CD4-positive, alpha-beta memory T cell (primary cell): ENCODE measurements at regions of chr4 and their contacts with region 1.

Region 1: GRCh38 chr4:139030614-139031235 is 15.1 kb downstream of the NOCT start:
- DNase-seq: peak; percentile 72 to 76 (median 74)
- H3K4me3 ChIP-seq: no peak overlapping the region
- H3K4me3 Mint-ChIP-seq: no peak overlapping the region
- H3K27ac ChIP-seq: no peak overlapping the region
- H3K27ac Mint-ChIP-seq: peak overlapping the region in 5 of 7 donors; percentile 0 to 58 (median 19)
- H3K4me1 ChIP-seq: peaks cover 3% of the 10 kb centered on the region
- H3K4me1 Mint-ChIP-seq: peaks cover 6 to 11% (median 8%) of the 10 kb centered on the region in 4 donors
- H3K27me3 ChIP-seq: no peaks in the 10 kb centered on the region
- H3K27me3 Mint-ChIP-seq: no peaks in the 10 kb centered on the region

Region 2: DNA sequence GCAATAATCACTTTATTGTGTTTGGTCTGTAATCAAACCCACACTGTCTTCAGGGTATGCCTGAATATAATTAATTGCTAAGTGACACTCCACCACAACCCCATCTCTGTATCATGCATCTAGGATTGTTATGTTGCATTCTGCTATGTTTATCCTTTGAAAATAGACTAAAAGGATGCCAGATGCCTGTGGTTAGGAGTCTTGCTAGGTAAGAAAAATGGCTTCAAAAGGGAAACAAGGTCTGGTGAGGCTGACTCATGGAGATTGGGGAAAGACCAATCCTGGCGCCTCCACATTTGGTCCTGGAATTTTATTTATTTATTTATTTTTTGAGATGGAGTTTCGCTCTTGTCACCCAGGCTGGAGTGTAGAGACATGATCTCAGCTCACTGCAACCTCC is 428.1 kb before region 1 on chr4:
- CTCF ChIA-PET with region 1: no interaction called
- POLR2A ChIA-PET with region 1: no interaction called
- intact Hi-C with region 1: no loop called
- DNase-seq: no peak
- H3K4me3 ChIP-seq: no peak overlapping the region
- H3K4me3 Mint-ChIP-seq: no peak overlapping the region
- H3K27ac ChIP-seq: no peak overlapping the region
- H3K27ac Mint-ChIP-seq: no peak overlapping the region
- H3K4me1 ChIP-seq: no peaks in the 10 kb centered on the region
- H3K4me1 Mint-ChIP-seq: no peaks in the 10 kb centered on the region
- H3K27me3 ChIP-seq: no peaks in the 10 kb centered on the region
- H3K27me3 Mint-ChIP-seq: no peaks in the 10 kb centered on the region

Region 3: GRCh38 chr4:138680989-138681604 is 349.6 kb before region 1 on chr4:
- CTCF ChIA-PET with region 1: no interaction called
- POLR2A ChIA-PET with region 1: no interaction called
- intact Hi-C with region 1: no loop called
- DNase-seq: peak in 4 of 5 donors; percentile 32 to 43 (median 42)
- H3K4me3 ChIP-seq: no peak overlapping the region
- H3K4me3 Mint-ChIP-seq: no peak overlapping the region
- H3K27ac ChIP-seq: no peak overlapping the region
- H3K27ac Mint-ChIP-seq: no peak overlapping the region
- H3K4me1 ChIP-seq: no peaks in the 10 kb centered on the region
- H3K4me1 Mint-ChIP-seq: no peaks in the 10 kb centered on the region
- H3K27me3 ChIP-seq: no peaks in the 10 kb centered on the region
- H3K27me3 Mint-ChIP-seq: peaks cover 8 to 9% of the 10 kb centered on the region in 2 donors

Region 4: GRCh38 chr4:139007640-139008039 is 23.1 kb before region 1 on chr4:
- CTCF ChIA-PET with region 1: interaction called, 11 read pairs
- POLR2A ChIA-PET with region 1: no interaction called
- intact Hi-C with region 1: no loop called
- DNase-seq: no peak
- H3K4me3 ChIP-seq: no peak overlapping the region
- H3K4me3 Mint-ChIP-seq: no peak overlapping the region
- H3K27ac ChIP-seq: no peak overlapping the region
- H3K27ac Mint-ChIP-seq: no peak overlapping the region
- H3K4me1 ChIP-seq: no peaks in the 10 kb centered on the region
- H3K4me1 Mint-ChIP-seq: no peaks in the 10 kb centered on the region
- H3K27me3 ChIP-seq: no peaks in the 10 kb centered on the region
- H3K27me3 Mint-ChIP-seq: no peaks in the 10 kb centered on the region

Region 5: GRCh38 chr4:139050446-139050845 is 19.7 kb after region 1 on chr4:
- CTCF ChIA-PET with region 1: interaction called, 14 read pairs
- POLR2A ChIA-PET with region 1: no interaction called
- intact Hi-C with region 1: no loop called
- DNase-seq: no peak
- H3K4me3 ChIP-seq: no peak overlapping the region
- H3K4me3 Mint-ChIP-seq: no peak overlapping the region
- H3K27ac ChIP-seq: no peak overlapping the region
- H3K27ac Mint-ChIP-seq: peak overlapping the region in 3 of 7 donors; percentile 21 to 42 (median 42)
- H3K4me1 ChIP-seq: peaks cover 2% of the 10 kb centered on the region
- H3K4me1 Mint-ChIP-seq: peaks cover 8 to 18% (median 13%) of the 10 kb centered on the region in 4 donors
- H3K27me3 ChIP-seq: no peaks in the 10 kb centered on the region
- H3K27me3 Mint-ChIP-seq: no peaks in the 10 kb centered on the region

Region 6: GRCh38 chr4:139177868-139178611 is 147.3 kb after region 1 on chr4:
- CTCF ChIA-PET with region 1: interaction called, 5 read pairs
- POLR2A ChIA-PET with region 1: interaction called, 4 read pairs
- intact Hi-C with region 1: loop called (anchors 5 kb)
- DNase-seq: peak; percentile 92 to 94 (median 92)
- H3K4me3 ChIP-seq: peak overlapping the region; percentile 88 to 89
- H3K4me3 Mint-ChIP-seq: peak overlapping the region; percentile 89 to 94 (median 92)
- H3K27ac ChIP-seq: peak overlapping the region; percentile 96
- H3K27ac Mint-ChIP-seq: peak overlapping the region; percentile 92 to 97 (median 96)
- H3K4me1 ChIP-seq: peaks cover 17% of the 10 kb centered on the region
- H3K4me1 Mint-ChIP-seq: peaks cover 14 to 29% (median 18%) of the 10 kb centered on the region in 4 donors
- H3K27me3 ChIP-seq: no peaks in the 10 kb centered on the region
- H3K27me3 Mint-ChIP-seq: no peaks in the 10 kb centered on the region

Region 7: DNA sequence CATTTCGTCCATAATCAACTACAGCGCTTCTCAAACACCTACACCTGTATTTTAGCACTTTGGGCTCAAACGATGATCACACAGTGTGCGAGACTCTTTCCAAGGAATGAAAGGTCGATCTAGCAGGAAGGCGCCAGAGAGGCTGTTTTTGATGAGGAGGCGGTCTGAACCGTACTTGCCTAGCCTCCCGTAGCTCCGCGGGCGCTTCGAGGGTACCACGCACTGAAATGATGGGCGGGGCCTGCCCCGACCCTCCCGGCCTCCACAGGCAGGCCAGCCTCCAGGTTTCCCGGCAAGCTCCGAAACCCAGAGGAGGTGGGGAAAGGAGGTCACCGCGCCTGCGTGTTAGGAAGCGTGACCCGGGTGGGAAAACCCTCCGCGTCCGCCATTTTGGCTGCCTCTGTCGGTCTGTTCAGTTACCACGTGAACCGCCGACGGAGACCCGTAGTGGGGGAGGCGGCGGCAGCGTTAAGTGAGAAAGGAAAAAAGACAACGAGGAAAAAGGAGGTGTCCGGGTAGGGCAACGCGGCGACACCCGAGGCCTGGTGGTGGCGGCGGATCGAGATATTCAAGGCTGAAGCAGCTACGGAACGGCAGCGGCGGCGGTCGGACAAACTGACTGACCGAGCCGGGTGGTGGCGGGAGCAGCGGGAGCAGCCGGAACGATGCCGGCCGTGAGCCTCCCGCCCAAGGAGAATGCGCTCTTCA is 270.5 kb after region 1 on chr4 and contains the start of gene NAA15:
- CTCF ChIA-PET with region 1: interaction called, 47 read pairs
- POLR2A ChIA-PET with region 1: interaction called, 11 read pairs
- intact Hi-C with region 1: no loop called
- DNase-seq: peak; percentile 97 to 99 (median 97)
- H3K4me3 ChIP-seq: peak within 1 kb of the TSS; percentile 69 to 94
- H3K4me3 Mint-ChIP-seq: peak within 1 kb of the TSS; percentile 96 to 100 (median 99)
- H3K27ac ChIP-seq: peak within 1 kb of the TSS; percentile 98
- H3K27ac Mint-ChIP-seq: peak within 1 kb of the TSS; percentile 94 to 100 (median 99)
- H3K4me1 ChIP-seq: peaks cover 56% of the 10 kb centered on the region
- H3K4me1 Mint-ChIP-seq: peaks cover 22 to 73% (median 43%) of the 10 kb centered on the region in 4 donors
- H3K27me3 ChIP-seq: no peaks in the 10 kb centered on the region
- H3K27me3 Mint-ChIP-seq: no peaks in the 10 kb centered on the region
- total RNA-seq, gene NAA15: 45.8 to 46.5 TPM

Region 8: GRCh38 chr4:139651282-139652194 is 620.8 kb after region 1 on chr4:
- CTCF ChIA-PET with region 1: interaction called, 49 read pairs
- POLR2A ChIA-PET with region 1: no interaction called
- intact Hi-C with region 1: no loop called
- DNase-seq: peak; percentile 56 to 68 (median 61)
- H3K4me3 ChIP-seq: no peak overlapping the region
- H3K4me3 Mint-ChIP-seq: peak overlapping the region in 4 of 8 donors; percentile 6 to 32 (median 14)
- H3K27ac ChIP-seq: no peak overlapping the region
- H3K27ac Mint-ChIP-seq: no peak overlapping the region
- H3K4me1 ChIP-seq: no peaks in the 10 kb centered on the region
- H3K4me1 Mint-ChIP-seq: peaks cover 0 to 7% (median 5%) of the 10 kb centered on the region in 4 donors
- H3K27me3 ChIP-seq: no peaks in the 10 kb centered on the region
- H3K27me3 Mint-ChIP-seq: peaks cover 0 to 2% of the 10 kb centered on the region in 2 donors